Activated CD4-positive, alpha-beta memory T cell treated with anti-CD3 and anti-CD28 coated beads, Interleukin-2, amount 10 ng/mL, durations not matched to agents 7 days and 5 days (primary cell): ENCODE measurements at regions of chr1 and their contacts with region 1.

Region 1: GRCh38 chr1:10209905-10210810 is at the start of gene KIF1B:
- DNase-seq: peak; percentile 97
- H3K4me3 Mint-ChIP-seq: peak within 1 kb of the TSS; percentile 88
- H3K27ac Mint-ChIP-seq: peak within 1 kb of the TSS; percentile 44
- H3K4me1 Mint-ChIP-seq: peaks cover 35% of the 10 kb centered on the region
- H3K27me3 Mint-ChIP-seq: no peaks in the 10 kb centered on the region
- total RNA-seq, gene KIF1B: 22.5 to 22.7 TPM

Region 2: DNA sequence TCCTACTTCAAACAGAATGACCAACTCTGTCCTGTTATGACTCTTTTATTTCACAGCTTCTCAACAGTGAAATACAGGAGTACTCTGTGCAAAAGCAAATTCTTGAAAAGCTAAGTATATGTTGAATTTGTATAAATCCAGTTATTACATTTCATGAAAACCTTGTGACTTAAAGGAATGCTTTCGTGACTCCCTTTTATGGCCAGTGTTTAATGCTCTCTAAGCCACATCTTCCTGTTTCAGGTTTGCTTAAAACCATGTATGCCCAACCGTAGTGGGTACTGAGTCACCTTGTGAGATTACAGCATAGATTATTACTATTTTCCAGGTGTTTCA is 40.0 kb before region 1 on chr1:
- CTCF ChIA-PET with region 1: interaction called, 18 read pairs
- POLR2A ChIA-PET with region 1: interaction called, 5 read pairs
- DNase-seq: peak; percentile 36
- H3K4me3 Mint-ChIP-seq: peak overlapping the region; percentile 56
- H3K27ac Mint-ChIP-seq: peak overlapping the region; percentile 97
- H3K4me1 Mint-ChIP-seq: peaks cover 56% of the 10 kb centered on the region
- H3K27me3 Mint-ChIP-seq: no peaks in the 10 kb centered on the region

Region 3: DNA sequence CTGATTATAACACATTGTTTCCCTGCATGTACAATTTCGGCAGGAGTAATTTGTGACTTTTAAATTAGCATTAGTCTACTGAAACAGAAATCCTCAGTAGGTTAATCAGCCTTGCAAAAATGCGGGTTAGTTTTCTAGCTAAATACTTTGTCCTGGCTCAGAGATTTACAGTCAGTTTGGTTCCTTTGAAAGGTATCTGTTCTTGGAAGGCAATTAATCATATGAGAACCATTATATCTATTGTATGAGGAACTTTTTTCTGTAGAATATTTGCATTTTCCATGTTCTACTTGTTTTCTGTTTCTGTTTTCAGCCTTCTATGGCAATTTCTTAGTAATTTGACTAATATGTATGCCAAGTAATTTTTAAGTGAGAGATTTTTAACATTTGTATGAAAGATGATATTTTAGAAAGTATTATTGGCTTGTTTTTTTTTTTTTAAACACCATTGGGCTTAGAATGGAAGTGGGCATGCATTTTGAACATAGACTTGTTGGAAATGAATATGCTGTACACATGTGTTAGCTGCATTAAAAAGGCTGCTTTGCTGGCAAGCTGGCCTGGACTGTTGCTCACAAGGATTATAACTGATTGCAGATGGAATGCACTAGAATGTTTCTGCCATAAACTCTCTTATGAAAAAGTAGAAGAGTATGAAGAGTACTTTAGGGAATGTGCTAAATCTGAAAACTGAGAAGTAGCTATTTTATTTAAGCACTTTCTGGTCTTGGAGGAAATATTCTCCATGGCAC is 26.4 kb after region 1 on chr1:
- CTCF ChIA-PET with region 1: interaction called, 17 read pairs
- POLR2A ChIA-PET with region 1: interaction called, 3 read pairs
- DNase-seq: no peak
- H3K4me3 Mint-ChIP-seq: no peak overlapping the region
- H3K27ac Mint-ChIP-seq: no peak overlapping the region
- H3K4me1 Mint-ChIP-seq: peaks cover 19% of the 10 kb centered on the region
- H3K27me3 Mint-ChIP-seq: no peaks in the 10 kb centered on the region

Region 4: GRCh38 chr1:10267319-10267718 is 57.2 kb after region 1 on chr1:
- CTCF ChIA-PET with region 1: interaction called, 12 read pairs
- POLR2A ChIA-PET with region 1: no interaction called
- DNase-seq: no peak
- H3K4me3 Mint-ChIP-seq: no peak overlapping the region
- H3K27ac Mint-ChIP-seq: no peak overlapping the region
- H3K4me1 Mint-ChIP-seq: peaks cover 14% of the 10 kb centered on the region
- H3K27me3 Mint-ChIP-seq: no peaks in the 10 kb centered on the region

Region 5: DNA sequence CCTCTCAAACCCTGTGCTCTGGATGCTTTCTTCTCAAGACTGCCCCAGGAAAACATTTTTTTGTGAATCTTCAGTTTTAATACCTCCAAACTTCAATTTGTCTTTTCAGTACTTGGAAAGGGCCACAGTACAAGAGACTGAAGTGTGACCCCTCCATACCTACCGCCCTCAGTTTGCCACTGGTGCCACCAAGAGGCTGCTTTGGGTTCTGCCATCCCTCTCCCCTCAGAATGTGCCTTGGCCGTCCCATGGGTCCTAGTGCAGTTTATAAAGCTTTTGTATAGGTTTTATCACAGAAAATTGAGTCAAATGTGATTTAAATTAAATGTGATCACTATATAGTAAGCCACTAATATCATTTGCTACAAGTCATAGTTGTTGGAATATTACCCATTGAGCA is 127.9 kb after region 1 on chr1:
- CTCF ChIA-PET with region 1: interaction called, 27 read pairs
- POLR2A ChIA-PET with region 1: interaction called, 4 read pairs
- DNase-seq: peak; percentile 46
- H3K4me3 Mint-ChIP-seq: no peak overlapping the region
- H3K27ac Mint-ChIP-seq: no peak overlapping the region
- H3K4me1 Mint-ChIP-seq: no peaks in the 10 kb centered on the region
- H3K27me3 Mint-ChIP-seq: no peaks in the 10 kb centered on the region

Region 6: GRCh38 chr1:10430216-10431069 is 220.3 kb after region 1 on chr1 and contains the start of gene CENPS:
- CTCF ChIA-PET with region 1: interaction called, 19 read pairs
- POLR2A ChIA-PET with region 1: interaction called, 4 read pairs
- DNase-seq: peak; percentile 85
- H3K4me3 Mint-ChIP-seq: peak within 1 kb of the TSS; percentile 86
- H3K27ac Mint-ChIP-seq: peak within 1 kb of the TSS; percentile 79
- H3K4me1 Mint-ChIP-seq: peaks cover 39% of the 10 kb centered on the region
- H3K27me3 Mint-ChIP-seq: no peaks in the 10 kb centered on the region
- total RNA-seq, gene CENPS: 13.5 to 15.2 TPM